Activated T-helper 2 cell treated with anti-CD3 and anti-CD28 coated beads, Interferon-gamma antibody, Interleukin-2, Interleukin-4, amounts not matched to agents 10 μg/mL and 5 μg/mL and 100 μg/mL, durations not matched to agents 14 hours and 24 hours and 36 hours (primary cell): ENCODE measurements at regions of chr2 and their contacts with region 1.

Region 1: GRCh38 chr2:224585205-224586088 is at the start of gene CUL3:
- DNase-seq: peak; percentile 98
- H3K4me3 Mint-ChIP-seq: peak within 1 kb of the TSS; percentile 98
- H3K27ac Mint-ChIP-seq: peak within 1 kb of the TSS; percentile 90
- H3K4me1 Mint-ChIP-seq: peaks cover 42% of the 10 kb centered on the region
- H3K27me3 Mint-ChIP-seq: no peaks in the 10 kb centered on the region
- total RNA-seq, gene CUL3: 79.6 and 89.8 TPM in 2 replicates

Region 2: DNA sequence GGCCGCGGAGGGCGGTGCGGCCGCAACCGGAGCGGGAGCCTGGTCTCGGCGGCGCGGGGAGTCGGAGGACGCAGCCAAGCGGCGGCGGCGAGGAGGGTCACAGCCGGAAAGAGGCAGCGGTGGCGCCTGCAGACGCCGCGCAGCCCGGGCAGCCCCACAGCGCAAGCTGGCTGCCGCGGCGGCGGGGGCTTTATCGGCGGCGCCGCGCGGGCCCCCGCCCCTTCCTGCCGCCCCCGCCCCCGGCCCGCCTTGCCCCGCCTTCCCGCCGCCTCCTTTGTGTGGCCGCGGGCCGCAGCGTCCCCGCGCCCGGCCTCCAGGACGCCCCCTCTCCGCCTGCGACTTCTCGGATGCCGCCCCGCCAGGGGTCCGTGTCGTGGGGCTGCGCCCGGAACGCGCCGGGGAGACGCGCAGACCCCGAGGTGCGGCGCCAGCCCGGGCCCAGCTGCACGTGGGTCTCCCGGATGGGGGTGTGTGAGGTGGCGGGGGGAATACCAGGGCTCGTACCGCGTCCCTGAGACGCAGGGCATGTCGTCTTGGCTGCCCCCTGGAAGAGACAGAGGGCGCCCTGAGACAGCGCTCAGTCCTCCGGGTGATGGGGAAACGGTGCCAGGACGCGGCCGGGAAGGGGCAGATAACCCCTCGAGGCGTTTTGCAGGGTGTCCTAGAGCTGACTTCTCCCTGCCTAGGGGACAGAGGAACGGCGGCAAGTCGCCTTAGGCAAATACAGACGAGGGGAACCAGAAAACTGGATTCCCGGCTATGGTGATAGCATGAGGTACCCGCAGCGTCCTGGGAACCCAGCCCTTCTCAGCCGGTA is 546.1 kb before region 1 on chr2 and contains the start of gene SERPINE2:
- intact Hi-C with region 1: loop called (anchors 10 kb)
- DNase-seq: peak; percentile 39
- H3K4me3 Mint-ChIP-seq: peak within 1 kb of the TSS; percentile 91
- H3K27ac Mint-ChIP-seq: peak within 1 kb of the TSS; percentile 13
- H3K4me1 Mint-ChIP-seq: peaks cover 21% of the 10 kb centered on the region
- H3K27me3 Mint-ChIP-seq: peaks cover 53% of the 10 kb centered on the region
- total RNA-seq, gene SERPINE2: 18.3 and 19.2 TPM in 2 replicates

Region 3: GRCh38 chr2:224401641-224402342 is 183.7 kb before region 1 on chr2 and contains the start of gene FAM124B:
- intact Hi-C with region 1: loop called (anchors 5 kb)
- DNase-seq: peak; percentile 59
- H3K4me3 Mint-ChIP-seq: peak within 1 kb of the TSS; percentile 78
- H3K27ac Mint-ChIP-seq: peak within 1 kb of the TSS; percentile 92
- H3K4me1 Mint-ChIP-seq: peaks cover 23% of the 10 kb centered on the region
- H3K27me3 Mint-ChIP-seq: peaks cover 2% of the 10 kb centered on the region
- total RNA-seq, gene FAM124B: 2.0 and 2.1 TPM in 2 replicates

Region 4: DNA sequence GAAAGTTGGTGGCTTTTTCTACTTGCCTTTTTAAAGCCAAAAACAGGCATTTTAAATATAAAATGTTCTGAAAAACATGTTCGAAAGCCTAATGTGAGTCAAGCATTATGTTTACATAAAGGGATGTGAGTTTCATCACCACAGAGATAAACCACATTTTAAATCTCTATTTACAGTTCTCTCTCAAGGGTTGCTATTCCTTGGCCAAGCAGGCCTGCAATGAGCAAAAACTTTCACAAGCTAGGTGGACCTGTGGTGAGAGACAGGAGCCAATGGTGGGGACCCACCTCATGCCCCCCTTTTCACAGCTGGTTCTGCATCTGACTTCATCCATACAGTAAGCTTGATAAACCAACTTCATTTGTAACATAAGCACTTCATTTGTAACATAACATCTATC is 65.4 kb before region 1 on chr2:
- intact Hi-C with region 1: loop called (anchors 2 kb)
- DNase-seq: peak; percentile 26
- H3K4me3 Mint-ChIP-seq: no peak overlapping the region
- H3K27ac Mint-ChIP-seq: peak overlapping the region; percentile 70
- H3K4me1 Mint-ChIP-seq: peaks cover 54% of the 10 kb centered on the region
- H3K27me3 Mint-ChIP-seq: no peaks in the 10 kb centered on the region

Region 5: DNA sequence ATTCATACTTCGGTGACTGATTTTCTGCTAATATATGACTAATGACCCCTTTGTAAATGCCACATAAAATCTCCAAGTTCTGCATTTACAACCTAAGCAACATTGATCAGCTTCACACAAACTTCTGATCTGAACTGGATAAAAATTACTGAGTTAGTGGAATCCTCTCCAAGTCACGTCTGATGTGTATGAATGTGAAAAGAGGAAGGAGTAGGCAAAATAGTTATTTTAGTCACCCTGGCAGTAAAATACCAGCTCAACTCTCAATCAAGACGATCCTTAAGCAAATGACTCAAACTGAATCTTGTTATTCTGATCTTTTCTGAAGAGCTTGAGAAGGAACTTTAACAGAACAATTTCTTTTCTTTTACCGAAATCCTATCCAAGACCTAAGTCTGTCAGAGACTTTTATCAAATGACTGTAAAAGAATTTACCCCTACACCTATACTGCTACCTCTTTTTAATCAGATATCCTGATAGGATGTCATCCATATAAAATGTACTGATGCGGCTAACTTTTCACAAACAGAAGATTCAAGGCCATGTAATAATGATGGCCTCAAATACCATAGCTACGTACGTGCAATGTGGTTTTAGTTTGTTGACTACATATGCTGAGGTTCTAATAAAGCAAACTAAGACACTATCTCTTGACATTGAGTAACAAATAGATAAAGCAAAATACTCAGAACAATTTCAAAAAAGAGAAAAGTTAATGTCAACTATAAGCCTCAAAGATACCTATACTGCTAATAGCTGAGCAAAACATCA is 24.0 kb before region 1 on chr2:
- intact Hi-C with region 1: loop called (anchors 1 kb)
- DNase-seq: no peak
- H3K4me3 Mint-ChIP-seq: no peak overlapping the region
- H3K27ac Mint-ChIP-seq: no peak overlapping the region
- H3K4me1 Mint-ChIP-seq: peaks cover 17% of the 10 kb centered on the region
- H3K27me3 Mint-ChIP-seq: no peaks in the 10 kb centered on the region

Region 6: GRCh38 chr2:224570328-224570993 is 15.0 kb before region 1 on chr2:
- intact Hi-C with region 1: loop called (anchors 2 kb)
- DNase-seq: no peak
- H3K4me3 Mint-ChIP-seq: no peak overlapping the region
- H3K27ac Mint-ChIP-seq: peak overlapping the region; percentile 5
- H3K4me1 Mint-ChIP-seq: peaks cover 44% of the 10 kb centered on the region
- H3K27me3 Mint-ChIP-seq: no peaks in the 10 kb centered on the region

Region 7: GRCh38 chr2:224922142-224922727 is 336.8 kb after region 1 on chr2:
- intact Hi-C with region 1: loop called (anchors 10 kb)
- DNase-seq: no peak
- H3K4me3 Mint-ChIP-seq: no peak overlapping the region
- H3K27ac Mint-ChIP-seq: peak overlapping the region; percentile 62
- H3K4me1 Mint-ChIP-seq: peaks cover 50% of the 10 kb centered on the region
- H3K27me3 Mint-ChIP-seq: no peaks in the 10 kb centered on the region